HepG2 (cell line): ENCODE measurements at regions of chr6 and their contacts with region 1.

Region 1: GRCh38 chr6:165439928-165440554 is 130.6 kb upstream of the C6orf118 start:
- DNase-seq: peak; percentile 21
- ATAC-seq: peak; percentile 51; the same call in 2 of the 3 replicates
- H3K4me3 ChIP-seq: no peak overlapping the region
- H3K27ac ChIP-seq: no peak overlapping the region
- H3K4me1 ChIP-seq: no peaks in the 10 kb centered on the region
- H3K27me3 ChIP-seq: no peaks in the 10 kb centered on the region
- CTCF ChIP-seq: peak; percentile 48
- EP300 ChIP-seq: no peak
- POLR2A ChIP-seq: no peak
- RAD21 ChIP-seq: no peak; the same call in 1 of the 2 replicates

Region 2: DNA sequence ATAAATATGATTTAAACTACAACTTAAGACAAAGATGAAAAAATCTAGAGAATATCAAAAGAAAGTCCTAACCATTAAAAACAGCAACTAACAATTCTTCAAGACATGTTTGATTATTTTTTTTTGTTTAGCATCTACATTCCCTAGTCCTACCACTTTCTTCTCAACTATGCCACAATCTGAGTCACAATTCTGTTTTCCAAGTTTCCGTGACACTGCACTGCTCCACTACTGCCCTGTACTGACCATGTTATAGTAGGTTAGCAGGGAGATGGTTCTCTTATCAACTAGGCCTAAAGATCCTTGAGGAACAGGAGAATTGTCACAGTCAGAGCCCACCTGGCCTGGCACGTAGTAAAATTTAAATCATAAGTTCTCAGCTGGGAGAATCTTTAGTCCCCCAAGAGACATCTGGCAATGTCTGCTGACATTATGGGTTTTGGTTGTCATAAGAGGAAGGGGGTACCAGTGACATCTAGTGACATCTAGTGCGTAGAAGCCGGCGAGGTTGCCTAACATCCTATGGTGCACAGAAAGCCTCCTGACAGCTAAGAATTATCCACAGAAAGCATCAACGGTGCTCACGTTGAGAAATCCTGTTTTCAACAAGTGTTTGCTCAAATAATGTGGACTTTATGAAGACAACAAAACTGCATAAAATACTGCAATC is 122.5 kb after region 1 on chr6:
- CTCF ChIA-PET with region 1: no interaction called
- POLR2A ChIA-PET with region 1: no interaction called
- in situ Hi-C with region 1: no loop called
- intact Hi-C with region 1: loop called (anchors 1 kb)
- DNase-seq: no peak
- ATAC-seq: no peak
- H3K4me3 ChIP-seq: no peak overlapping the region
- H3K27ac ChIP-seq: no peak overlapping the region
- H3K4me1 ChIP-seq: no peaks in the 10 kb centered on the region
- H3K27me3 ChIP-seq: no peaks in the 10 kb centered on the region
- CTCF ChIP-seq: no peak
- EP300 ChIP-seq: no peak
- POLR2A ChIP-seq: no peak
- RAD21 ChIP-seq: no peak

Region 3: DNA sequence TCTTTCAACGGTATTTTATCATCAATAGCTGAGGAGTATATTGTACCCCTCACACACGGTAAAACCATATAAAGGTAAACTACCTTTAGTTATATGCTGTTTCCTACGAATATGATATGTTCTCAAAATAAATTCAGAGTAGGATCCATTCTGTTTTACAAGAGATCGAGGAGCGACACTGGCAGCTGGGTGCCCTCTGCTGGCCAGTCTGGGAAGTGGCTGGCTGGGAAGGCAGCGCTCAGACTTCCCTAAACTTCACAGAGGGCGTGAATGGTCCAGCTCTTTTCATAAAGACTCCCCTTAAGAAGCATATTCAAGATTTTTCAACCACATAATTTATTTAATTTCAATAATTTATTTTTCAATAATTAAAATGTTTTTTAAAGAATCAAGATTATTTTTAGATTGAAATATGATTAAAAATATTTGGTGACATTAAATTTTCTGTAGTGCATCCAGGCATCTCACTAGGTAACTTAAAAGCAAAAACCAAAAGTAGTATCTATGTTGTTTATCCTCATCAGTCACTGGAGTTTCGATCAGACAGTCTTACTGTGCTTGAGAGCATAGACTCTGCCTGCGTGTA is 410.5 kb after region 1 on chr6:
- CTCF ChIA-PET with region 1: interaction called, 16 read pairs
- POLR2A ChIA-PET with region 1: no interaction called
- in situ Hi-C with region 1: loop called (anchors 10 kb)
- intact Hi-C with region 1: no loop called
- DNase-seq: peak; percentile 27
- ATAC-seq: peak; percentile 88
- H3K4me3 ChIP-seq: no peak overlapping the region
- H3K27ac ChIP-seq: no peak overlapping the region
- H3K4me1 ChIP-seq: no peaks in the 10 kb centered on the region
- H3K27me3 ChIP-seq: peaks cover 10 to 63% of the 10 kb centered on the region in 2 experiments
- CTCF ChIP-seq: peak; percentile 88
- EP300 ChIP-seq: no peak
- POLR2A ChIP-seq: no peak
- RAD21 ChIP-seq: peak; percentile 73

Region 4: GRCh38 chr6:166106076-166106686 is 666.1 kb after region 1 on chr6:
- CTCF ChIA-PET with region 1: no interaction called
- POLR2A ChIA-PET with region 1: no interaction called
- in situ Hi-C with region 1: no loop called
- intact Hi-C with region 1: loop called (anchors 2 kb)
- DNase-seq: peak; percentile 50
- ATAC-seq: peak; percentile 91
- H3K4me3 ChIP-seq: no peak overlapping the region
- H3K27ac ChIP-seq: no peak overlapping the region
- H3K4me1 ChIP-seq: no peaks in the 10 kb centered on the region
- H3K27me3 ChIP-seq: peaks cover 0 to 5% of the 10 kb centered on the region in 2 experiments; a peak in 1 of 5 replicates
- CTCF ChIP-seq: peak; percentile 96
- EP300 ChIP-seq: no peak
- POLR2A ChIP-seq: no peak
- RAD21 ChIP-seq: peak; percentile 80